Activated CD4-positive, alpha-beta T cell treated with anti-CD3 and anti-CD28 coated beads, Interleukin-2, amount 10 ng/mL, durations not matched to agents 24 days and 14 days (primary cell): ENCODE measurements at regions of chr13 and their contacts with region 1.

Region 1: GRCh38 chr13:99269627-99270241 is 11.6 kb upstream of the GPR18 start:
- DNase-seq: peak; percentile 77
- H3K4me3 Mint-ChIP-seq: no peak overlapping the region
- H3K27ac Mint-ChIP-seq: no peak overlapping the region
- H3K4me1 Mint-ChIP-seq: peaks cover 44% of the 10 kb centered on the region
- H3K27me3 Mint-ChIP-seq: no peaks in the 10 kb centered on the region

Region 2: DNA sequence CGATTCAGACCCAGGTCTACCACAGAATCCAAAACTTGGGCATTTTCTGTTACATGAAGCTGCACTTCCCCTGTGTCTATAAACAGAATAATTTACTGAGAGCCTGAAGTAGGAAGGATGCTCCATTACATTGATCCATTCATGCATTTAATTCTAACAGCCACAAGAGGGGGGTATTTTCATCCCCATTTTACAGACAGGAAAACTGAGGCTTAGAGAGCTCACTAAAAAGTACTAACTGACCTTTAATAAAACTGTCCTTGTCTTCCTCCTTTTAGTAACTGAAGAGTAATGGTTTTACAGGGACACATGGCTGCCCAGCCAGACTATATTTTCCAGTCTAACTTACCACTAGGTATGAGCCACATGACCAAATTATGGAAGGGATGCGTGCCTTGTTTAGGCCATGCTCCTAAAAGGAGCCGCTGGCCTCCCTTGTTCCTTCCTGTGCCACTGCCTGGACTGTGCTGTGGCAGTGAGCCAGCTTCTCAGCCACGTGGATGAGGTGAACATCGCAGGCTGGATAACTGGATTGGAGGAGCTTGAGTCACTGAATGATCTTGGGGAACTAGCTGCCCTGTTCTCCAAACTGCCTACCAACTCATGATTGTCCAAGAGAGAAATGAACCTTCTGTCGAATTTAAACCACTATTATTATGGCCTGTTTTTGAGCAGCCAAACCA is 400.2 kb before region 1 on chr13:
- intact Hi-C with region 1: loop called (anchors 10 kb)
- DNase-seq: no peak
- H3K4me3 Mint-ChIP-seq: no peak overlapping the region
- H3K27ac Mint-ChIP-seq: no peak overlapping the region
- H3K4me1 Mint-ChIP-seq: peaks cover 25% of the 10 kb centered on the region
- H3K27me3 Mint-ChIP-seq: no peaks in the 10 kb centered on the region

Region 3: GRCh38 chr13:99176309-99177276 is 93.1 kb before region 1 on chr13:
- intact Hi-C with region 1: loop called (anchors 1 kb)
- DNase-seq: peak; percentile 93
- H3K4me3 Mint-ChIP-seq: peak overlapping the region; percentile 57
- H3K27ac Mint-ChIP-seq: no peak overlapping the region
- H3K4me1 Mint-ChIP-seq: peaks cover 31% of the 10 kb centered on the region
- H3K27me3 Mint-ChIP-seq: peaks cover 9% of the 10 kb centered on the region

Region 4: DNA sequence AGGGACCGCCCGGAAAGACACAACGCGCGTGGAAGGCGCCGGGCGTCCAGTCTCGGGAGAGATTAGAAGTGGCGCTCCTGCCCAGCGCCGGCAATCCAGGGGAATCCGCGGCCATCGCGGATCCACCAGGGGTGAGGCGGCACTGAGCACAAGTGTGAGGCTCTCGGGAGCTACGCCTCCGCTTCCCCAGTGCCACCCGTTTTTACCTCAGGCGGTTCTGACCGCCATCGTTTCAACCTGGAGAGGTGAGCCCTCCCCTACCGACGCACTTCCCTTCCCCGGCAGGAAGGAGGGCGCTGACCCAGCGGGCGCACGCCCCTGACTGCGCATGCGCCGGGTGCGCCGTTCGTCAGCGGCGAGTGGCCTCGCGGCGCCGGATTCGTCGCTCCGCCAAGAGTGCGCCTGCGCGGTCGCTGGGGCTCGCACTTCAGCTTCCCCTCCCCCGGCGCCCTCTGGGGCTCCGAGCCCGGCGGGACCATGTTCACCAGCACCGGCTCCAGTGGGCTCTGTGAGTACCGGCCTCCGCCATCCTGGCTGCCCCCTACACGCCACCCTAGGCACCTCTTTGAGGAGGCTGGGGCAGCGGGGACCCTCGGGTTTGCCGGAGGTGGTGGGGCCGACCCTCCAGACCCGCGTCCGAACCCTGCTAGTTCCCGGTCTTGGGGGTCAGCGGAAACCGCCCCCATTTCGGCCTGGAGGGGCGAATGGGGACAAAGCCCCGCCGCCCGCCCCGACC is 69.1 kb before region 1 on chr13 and contains the start of gene UBAC2:
- intact Hi-C with region 1: loop called (anchors 1 kb)
- DNase-seq: peak; percentile 99
- H3K4me3 Mint-ChIP-seq: peak within 1 kb of the TSS; percentile 97
- H3K27ac Mint-ChIP-seq: peak within 1 kb of the TSS; percentile 97
- H3K4me1 Mint-ChIP-seq: peaks cover 46% of the 10 kb centered on the region
- H3K27me3 Mint-ChIP-seq: no peaks in the 10 kb centered on the region
- total RNA-seq, gene UBAC2: 52.6 and 52.8 TPM in 2 replicates

Region 5: DNA sequence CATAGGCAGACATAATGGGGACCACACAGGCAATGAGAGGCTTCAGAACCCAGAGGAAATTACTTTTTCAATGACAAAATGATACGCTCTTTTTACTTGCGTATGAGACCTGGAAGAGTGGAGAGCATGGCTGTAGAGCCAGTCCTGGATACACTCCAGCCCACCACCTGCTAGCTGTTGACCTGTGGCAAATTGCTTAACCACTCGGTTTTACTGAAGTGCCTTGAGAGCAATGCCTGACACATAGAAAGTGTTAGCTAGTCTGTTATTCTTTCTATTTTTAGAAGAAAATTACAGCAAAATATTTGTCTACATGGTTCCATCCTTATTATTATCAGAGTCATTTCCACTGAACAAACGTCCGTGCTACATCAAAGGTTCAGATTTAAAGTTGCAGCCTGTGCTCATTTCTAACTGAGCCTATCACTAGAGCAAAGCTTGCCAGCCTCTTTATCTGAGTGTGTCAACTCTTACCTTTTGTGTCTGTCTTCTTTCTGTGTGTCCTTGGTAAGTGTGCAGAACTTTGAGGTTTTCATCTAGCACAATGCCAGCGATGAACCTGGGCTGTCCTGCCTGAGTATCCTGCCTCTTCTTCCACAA is 47.0 kb after region 1 on chr13:
- intact Hi-C with region 1: no loop called
- DNase-seq: no peak
- H3K4me3 Mint-ChIP-seq: peak overlapping the region; percentile 22
- H3K27ac Mint-ChIP-seq: peak overlapping the region; percentile 69
- H3K4me1 Mint-ChIP-seq: peaks cover 58% of the 10 kb centered on the region
- H3K27me3 Mint-ChIP-seq: no peaks in the 10 kb centered on the region

Region 6: GRCh38 chr13:99386911-99387788 is 117.4 kb after region 1 on chr13:
- intact Hi-C with region 1: loop called (anchors 1 kb)
- DNase-seq: peak; percentile 94
- H3K4me3 Mint-ChIP-seq: no peak overlapping the region
- H3K27ac Mint-ChIP-seq: peak overlapping the region; percentile 62
- H3K4me1 Mint-ChIP-seq: peaks cover 46% of the 10 kb centered on the region
- H3K27me3 Mint-ChIP-seq: no peaks in the 10 kb centered on the region